ENCODE measurements at regions of chr15 and their contacts with region 1.

Region 1: DNA sequence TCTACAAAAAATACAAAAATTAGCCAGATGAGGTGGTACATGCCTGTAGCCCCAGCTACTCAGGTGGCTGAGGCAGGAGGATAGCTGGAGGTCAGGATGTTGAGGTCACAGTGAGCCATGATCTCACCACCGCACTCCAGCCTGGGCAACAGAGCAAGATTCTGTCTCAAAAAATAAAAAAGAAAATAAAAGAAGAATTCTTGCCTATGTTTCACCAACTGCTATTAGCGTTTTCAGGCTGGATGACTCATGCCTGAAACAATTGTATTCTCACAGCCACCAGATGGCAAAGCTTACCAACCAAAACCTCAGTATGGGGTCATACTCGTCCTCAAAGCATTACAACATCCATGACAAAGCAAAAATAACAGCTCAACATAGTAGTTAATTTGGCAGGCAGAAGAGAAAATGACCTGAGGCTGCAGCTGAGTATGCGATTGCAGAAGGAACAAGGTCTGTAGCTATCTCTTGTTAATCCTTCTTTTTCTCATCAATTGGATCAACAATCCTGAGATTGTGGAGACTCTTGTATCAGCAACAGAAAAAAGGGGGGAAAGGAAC is 52.2 kb downstream of the TP53BP1 start:
- DNase-seq: peak; percentile 58
- H3K4me3 Mint-ChIP-seq: no peak overlapping the region
- H3K27ac Mint-ChIP-seq: peak overlapping the region; percentile 89
- H3K4me1 Mint-ChIP-seq: peaks cover 11% of the 10 kb centered on the region
- H3K27me3 Mint-ChIP-seq: no peaks in the 10 kb centered on the region

Region 2: DNA sequence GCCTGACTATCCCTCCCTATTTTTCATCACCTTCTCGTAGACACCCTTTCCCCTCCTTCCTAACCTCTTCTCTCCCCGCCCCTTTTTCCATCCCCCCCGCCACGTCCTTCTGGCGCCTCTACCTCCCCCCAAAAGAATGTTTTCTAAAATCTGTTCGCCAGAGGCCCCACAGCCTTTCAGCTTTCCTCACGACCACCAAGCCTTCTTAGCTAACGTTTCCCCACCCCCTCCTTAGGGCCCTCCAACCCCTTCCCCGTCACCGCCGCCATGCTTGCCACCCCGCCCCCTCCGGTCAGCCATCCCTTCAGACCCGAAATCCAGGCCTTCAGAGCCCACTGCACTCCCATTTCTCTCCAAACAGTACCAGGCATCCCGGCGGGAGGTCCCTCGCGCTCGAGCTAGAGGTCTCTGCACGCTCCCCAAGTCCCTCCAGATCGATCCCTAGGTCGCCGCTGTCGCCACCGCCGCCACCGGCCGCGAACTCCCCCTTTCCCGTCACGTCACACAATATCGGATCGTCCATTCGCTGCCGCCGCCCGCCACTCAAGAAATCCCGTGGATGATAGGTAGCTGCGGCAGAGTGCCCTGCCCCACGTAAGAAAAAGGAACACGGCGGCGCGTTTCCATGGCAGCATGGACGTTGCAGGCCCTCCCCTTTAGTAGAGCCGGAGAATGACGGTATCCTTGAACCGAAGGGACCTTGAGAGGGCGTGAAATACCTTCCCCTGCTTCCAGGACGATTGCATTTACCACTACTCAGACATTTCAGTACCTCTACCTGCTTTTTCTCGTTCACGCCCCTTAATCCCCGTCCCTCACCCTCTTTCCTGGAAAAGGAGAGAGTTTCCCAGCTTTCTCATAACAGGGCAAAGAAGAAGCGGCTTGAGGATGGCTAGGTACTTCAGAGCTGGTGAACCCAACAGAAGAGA is 52.1 kb after region 1 on chr15 and contains the start of gene TP53BP1:
- CTCF ChIA-PET with region 1: interaction called, 13 read pairs
- POLR2A ChIA-PET with region 1: interaction called, 3 read pairs
- DNase-seq: peak; percentile 97
- H3K4me3 Mint-ChIP-seq: peak within 1 kb of the TSS; percentile 99
- H3K27ac Mint-ChIP-seq: peak within 1 kb of the TSS; percentile 87
- H3K4me1 Mint-ChIP-seq: peaks cover 40% of the 10 kb centered on the region
- H3K27me3 Mint-ChIP-seq: no peaks in the 10 kb centered on the region
- total RNA-seq, gene TP53BP1: 26.6 to 28.1 TPM

Measured in activated CD4-positive, alpha-beta memory T cell treated with anti-CD3 and anti-CD28 coated beads, Interleukin-2, amount 10 ng/mL, durations not matched to agents 7 days and 5 days (primary cell).